ENCODE measurements at regions of chr1 and their contacts with region 1.

Region 1: DNA sequence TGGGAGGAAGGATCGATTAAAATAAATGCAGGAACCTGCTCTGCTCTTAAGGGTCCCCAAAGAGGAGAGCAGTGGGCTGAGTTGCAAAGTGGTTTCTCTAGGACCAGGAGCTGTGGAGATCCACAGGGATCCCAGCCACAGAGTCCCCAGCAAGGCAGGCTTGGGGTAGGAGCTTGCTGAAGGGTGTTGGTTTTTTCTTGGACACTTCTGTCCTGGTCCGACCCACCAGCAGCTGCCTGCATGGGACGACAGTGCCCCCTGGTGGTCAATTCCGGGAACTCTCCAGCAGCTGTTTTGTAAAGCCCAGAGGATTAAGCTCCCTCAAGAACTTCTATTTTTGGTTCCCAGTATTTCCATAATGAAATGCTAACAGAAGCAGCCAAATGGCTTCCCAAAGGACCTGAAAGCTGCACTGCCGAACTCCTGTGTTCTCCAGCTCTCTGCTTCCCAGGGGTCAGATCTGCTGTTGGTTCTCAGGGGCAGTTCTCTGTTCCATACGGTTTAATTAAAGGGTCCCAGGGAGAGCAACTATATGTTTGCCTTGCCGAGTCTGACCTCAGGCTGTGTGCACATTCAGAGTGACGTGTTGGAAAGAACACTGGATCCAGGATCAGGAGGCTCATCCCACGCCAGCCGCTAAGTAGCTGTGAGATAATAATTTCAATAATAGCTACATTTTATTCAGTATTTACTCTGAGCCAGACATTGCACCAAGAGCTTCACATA is 23.2 kb downstream of the NENF start:
- DNase-seq: peak; percentile 72 to 99 (median 96)

Region 2: GRCh38 chr1:211680752-211681327 is 775.1 kb before region 1 on chr1:
- intact Hi-C with region 1: loop called (anchors 10 kb)
- DNase-seq: peak; percentile 62 to 91 (median 82)

Region 3: DNA sequence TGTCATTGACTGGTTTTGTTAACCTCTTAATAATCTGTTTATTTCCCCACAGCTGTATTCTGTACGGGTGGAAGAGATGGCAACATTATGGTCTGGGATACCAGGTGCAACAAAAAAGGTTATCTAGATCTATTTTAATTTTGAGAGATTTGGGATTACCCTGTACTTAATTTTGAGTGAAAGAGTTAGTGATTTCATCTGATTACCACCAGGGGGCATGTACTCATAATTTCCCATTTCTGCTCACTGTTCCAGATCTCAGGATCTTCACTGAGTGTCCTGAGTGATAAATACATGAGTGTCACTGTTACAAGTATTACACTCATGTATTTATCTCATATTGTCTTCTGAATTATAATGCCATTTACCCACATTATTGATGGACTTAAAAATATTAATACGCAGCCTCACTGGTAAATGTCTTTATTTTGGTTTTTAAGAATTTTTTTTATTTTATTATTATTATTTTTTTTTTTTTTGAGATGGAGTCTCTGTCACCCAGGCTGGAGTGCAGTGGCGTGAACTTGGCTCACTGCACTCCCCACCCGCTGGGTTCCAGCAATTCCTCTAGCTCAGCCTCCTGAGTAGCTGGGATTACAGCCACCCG is 393.0 kb before region 1 on chr1:
- intact Hi-C with region 1: loop called (anchors 5 kb)
- DNase-seq: peak in 3 of 42 donors; percentile 8 to 26 (median 14)

Region 4: GRCh38 chr1:212284744-212285684 is 171.0 kb before region 1 on chr1 and contains the start of gene PPP2R5A:
- intact Hi-C with region 1: loop called (anchors 10 kb)
- DNase-seq: peak; percentile 97 to 100 (median 99)

Region 5: DNA sequence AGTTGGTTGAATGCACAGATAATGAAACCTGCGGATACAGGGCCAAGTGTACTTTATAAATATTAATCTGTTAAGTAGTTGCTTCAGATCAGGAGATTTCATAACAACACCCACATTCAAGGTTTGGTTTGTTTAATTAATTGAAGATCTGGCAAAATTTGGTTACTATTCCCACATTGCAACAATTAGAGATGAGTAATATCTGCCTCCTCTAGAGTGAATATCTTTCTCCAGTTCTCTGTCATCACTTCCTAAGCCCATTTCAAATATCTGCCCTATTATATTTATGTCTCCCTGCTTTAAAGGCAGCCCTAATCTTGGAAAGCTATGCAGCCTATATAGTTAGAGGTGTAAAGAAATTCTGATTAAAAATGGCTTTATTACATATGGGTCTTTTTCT is 109.4 kb before region 1 on chr1:
- intact Hi-C with region 1: no loop called
- DNase-seq: no peak

Region 6: GRCh38 chr1:212545941-212546635 is 90.1 kb after region 1 on chr1:
- intact Hi-C with region 1: no loop called
- DNase-seq: peak in 14 of 42 donors; percentile 11 to 77 (median 45)

Region 7: DNA sequence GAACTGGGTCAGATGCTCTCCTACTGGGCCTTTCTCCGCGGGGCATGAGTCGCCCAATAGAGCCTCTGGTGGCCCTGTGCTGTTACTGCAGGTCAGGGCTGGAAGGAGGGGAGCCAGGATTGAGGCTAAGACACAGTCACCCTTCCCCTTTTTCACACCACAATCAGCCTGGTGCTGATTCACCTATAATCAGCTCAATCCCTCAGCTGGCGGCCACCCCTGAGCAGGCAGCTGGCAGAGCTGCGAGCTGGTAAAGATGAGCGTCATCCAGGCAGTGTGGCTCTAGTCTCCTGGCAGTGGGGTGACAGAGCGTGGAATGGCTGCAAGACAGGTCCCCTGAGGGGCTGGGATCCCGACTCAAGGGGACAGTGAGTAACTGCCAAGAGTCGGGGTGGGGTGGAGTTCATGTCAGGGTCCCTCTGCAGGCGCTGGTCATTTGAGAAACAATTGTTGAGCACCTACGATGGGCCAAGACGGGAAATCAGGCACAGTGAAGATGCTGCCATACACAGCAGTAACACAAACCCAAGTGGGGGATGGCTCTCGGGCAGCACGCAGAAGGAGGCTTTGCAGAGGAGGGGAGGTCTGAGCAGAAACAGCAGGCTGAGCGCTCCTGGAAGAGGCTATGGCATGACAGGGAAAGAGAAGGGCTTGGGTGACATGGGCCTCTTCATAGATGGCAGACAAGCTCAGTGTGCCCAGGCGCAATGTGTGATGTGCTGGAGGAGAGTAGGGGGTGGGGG is 174.4 kb after region 1 on chr1:
- intact Hi-C with region 1: no loop called
- DNase-seq: peak; percentile 30 to 87 (median 72)